Esophagus muscularis mucosa (tissue), 4 donors: ENCODE measurements at regions of chr1 and their contacts with region 1.

Region 1: GRCh38 chr1:168783458-168784230 is 54.6 kb upstream of the DPT start:
- DNase-seq: no peak
- H3K4me3 ChIP-seq: no peak overlapping the region
- H3K27ac ChIP-seq: peak overlapping the region; percentile 43 to 60 (median 56)
- H3K4me1 ChIP-seq: peaks cover 3 to 17% (median 9%) of the 10 kb centered on the region in 4 donors
- H3K27me3 ChIP-seq: no peaks in the 10 kb centered on the region
- CTCF ChIP-seq: no peak
- EP300 ChIP-seq: no peak
- POLR2A ChIP-seq: no peak

Region 2: GRCh38 chr1:168613691-168614231 is 169.9 kb before region 1 on chr1:
- intact Hi-C with region 1: loop called (anchors 10 kb)
- DNase-seq: peak; percentile 86
- H3K4me3 ChIP-seq: no peak overlapping the region
- H3K27ac ChIP-seq: peak overlapping the region; percentile 42 to 70 (median 66)
- H3K4me1 ChIP-seq: peaks cover 28 to 44% (median 42%) of the 10 kb centered on the region in 4 donors
- H3K27me3 ChIP-seq: no peaks in the 10 kb centered on the region
- CTCF ChIP-seq: no peak
- EP300 ChIP-seq: peak; percentile 13
- POLR2A ChIP-seq: no peak

Region 3: GRCh38 chr1:168637350-168637991 is 146.2 kb before region 1 on chr1:
- intact Hi-C with region 1: no loop called
- DNase-seq: no peak
- H3K4me3 ChIP-seq: no peak overlapping the region
- H3K27ac ChIP-seq: peak overlapping the region; percentile 63 to 77 (median 74)
- H3K4me1 ChIP-seq: peaks cover 0 to 34% (median 26%) of the 10 kb centered on the region in 4 donors
- H3K27me3 ChIP-seq: no peaks in the 10 kb centered on the region
- CTCF ChIP-seq: peak; percentile 31 to 51 (median 33)
- EP300 ChIP-seq: no peak
- POLR2A ChIP-seq: no peak

Region 4: DNA sequence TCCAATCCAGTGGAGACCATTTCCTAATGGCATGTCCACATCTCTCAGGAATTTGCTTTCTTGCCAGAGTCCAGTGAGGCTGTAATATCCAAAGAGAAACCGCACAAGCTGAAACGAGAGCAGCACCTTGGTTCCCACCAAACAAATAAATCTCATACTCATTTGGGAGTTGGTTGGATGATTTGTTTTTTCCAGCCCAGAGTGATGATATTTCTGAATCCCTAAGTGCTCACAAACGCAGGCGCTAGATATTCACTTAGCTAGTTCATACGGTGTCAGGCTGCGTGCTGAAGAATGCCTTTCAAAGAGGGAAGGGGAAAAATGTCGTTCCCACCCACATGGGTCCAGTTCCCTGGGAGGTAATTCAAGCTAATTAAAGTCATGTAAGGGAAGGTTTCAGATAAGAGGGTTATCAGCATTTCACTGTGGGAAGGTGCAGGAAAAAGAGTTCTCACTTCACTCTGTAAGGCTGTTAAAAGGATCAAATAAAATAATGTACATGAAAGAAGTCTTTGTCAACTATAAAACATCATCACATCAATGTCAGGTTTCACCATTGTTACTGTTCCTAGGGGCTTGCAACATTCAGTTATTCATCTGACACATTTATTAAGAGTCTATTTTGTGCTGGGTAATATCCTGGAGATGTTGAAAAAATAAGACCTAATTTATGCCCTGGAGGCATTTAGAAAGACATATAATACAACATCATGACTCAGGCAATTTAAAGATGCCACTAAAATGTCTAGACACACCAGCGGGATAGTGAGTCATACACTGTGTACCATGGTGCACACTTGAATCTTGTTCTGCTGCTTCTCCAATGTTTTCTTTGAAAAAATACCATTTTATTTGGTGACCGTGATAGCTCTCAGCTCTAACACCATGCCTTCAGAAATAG is 74.0 kb before region 1 on chr1:
- intact Hi-C with region 1: loop called (anchors 5 kb)
- DNase-seq: no peak
- H3K4me3 ChIP-seq: peak overlapping the region in 3 of 4 donors; percentile 7 to 34 (median 18)
- H3K27ac ChIP-seq: peak overlapping the region; percentile 67 to 75 (median 70)
- H3K4me1 ChIP-seq: peaks cover 11 to 36% (median 35%) of the 10 kb centered on the region in 4 donors
- H3K27me3 ChIP-seq: no peaks in the 10 kb centered on the region
- CTCF ChIP-seq: no peak
- EP300 ChIP-seq: no peak
- POLR2A ChIP-seq: no peak